ENCODE measurements at regions of chr3 and their contacts with region 1.

Region 1: GRCh38 chr3:149129326-149130205 is at the start of gene HPS3:
- DNase-seq: peak; percentile 81
- H3K4me3 Mint-ChIP-seq: peak within 1 kb of the TSS; percentile 90
- H3K27ac Mint-ChIP-seq: peak within 1 kb of the TSS; percentile 81
- H3K4me1 Mint-ChIP-seq: peaks cover 32% of the 10 kb centered on the region
- H3K27me3 Mint-ChIP-seq: peaks cover 21% of the 10 kb centered on the region
- total RNA-seq, gene HPS3: 20.2 and 24.4 TPM in 2 replicates

Region 2: DNA sequence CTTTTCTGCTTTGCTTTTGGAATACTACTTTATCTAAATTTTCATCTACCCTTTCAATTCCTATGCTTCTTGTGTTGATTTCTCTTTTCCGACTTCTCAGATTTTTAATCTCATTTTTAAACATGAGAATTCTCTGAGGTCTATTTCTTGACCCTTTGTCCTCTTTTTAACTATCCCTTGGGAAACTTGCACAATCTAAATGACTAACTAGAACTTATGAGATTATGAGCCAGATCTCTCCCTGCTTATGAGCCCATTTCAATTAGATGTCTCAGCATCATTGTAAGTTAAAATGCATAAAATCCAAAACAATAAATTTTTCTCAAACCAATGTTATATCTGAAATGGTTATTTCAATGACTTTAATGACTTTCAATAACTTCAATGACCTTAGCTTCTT is 728.8 kb before region 1 on chr3:
- intact Hi-C with region 1: no loop called
- DNase-seq: no peak
- H3K4me3 Mint-ChIP-seq: no peak overlapping the region
- H3K27ac Mint-ChIP-seq: no peak overlapping the region
- H3K4me1 Mint-ChIP-seq: no peaks in the 10 kb centered on the region
- H3K27me3 Mint-ChIP-seq: no peaks in the 10 kb centered on the region

Region 3: DNA sequence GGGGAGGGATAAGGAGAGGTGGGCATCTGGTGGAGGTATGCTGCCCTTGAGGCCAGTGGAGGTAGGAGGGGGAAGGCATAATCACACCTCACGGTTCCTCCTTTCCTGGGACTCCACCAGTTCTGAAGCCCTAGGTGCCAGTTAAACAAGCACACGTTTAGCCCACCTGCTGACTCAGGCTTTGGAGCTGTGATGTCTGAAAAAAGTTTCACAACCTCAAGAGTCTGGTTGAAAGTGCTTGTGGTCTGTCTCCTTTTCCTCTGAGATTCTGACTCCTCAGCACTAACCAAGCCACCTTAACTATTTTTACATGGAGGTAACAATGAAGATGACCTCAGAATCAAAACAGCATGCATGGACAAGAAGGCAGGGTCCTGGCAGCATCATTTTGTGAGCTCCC is 22.9 kb after region 1 on chr3:
- intact Hi-C with region 1: loop called (anchors 2 kb)
- DNase-seq: no peak
- H3K4me3 Mint-ChIP-seq: no peak overlapping the region
- H3K27ac Mint-ChIP-seq: no peak overlapping the region
- H3K4me1 Mint-ChIP-seq: peaks cover 18% of the 10 kb centered on the region
- H3K27me3 Mint-ChIP-seq: no peaks in the 10 kb centered on the region

Region 4: GRCh38 chr3:149163066-149163465 is 33.5 kb after region 1 on chr3:
- intact Hi-C with region 1: no loop called
- DNase-seq: no peak
- H3K4me3 Mint-ChIP-seq: no peak overlapping the region
- H3K27ac Mint-ChIP-seq: no peak overlapping the region
- H3K4me1 Mint-ChIP-seq: peaks cover 3% of the 10 kb centered on the region
- H3K27me3 Mint-ChIP-seq: no peaks in the 10 kb centered on the region

Measured in activated T-helper 2 cell treated with anti-CD3 and anti-CD28 coated beads, Interferon-gamma antibody, Interleukin-2, Interleukin-4, amounts not matched to agents 10 μg/mL and 5 μg/mL and 100 μg/mL, durations not matched to agents 14 hours and 24 hours and 36 hours (primary cell).